Activated CD4-positive, alpha-beta T cell treated with anti-CD3 and anti-CD28 coated beads for 36 hours (primary cell): ENCODE measurements at regions of chr18 and their contacts with region 1.

Region 1: DNA sequence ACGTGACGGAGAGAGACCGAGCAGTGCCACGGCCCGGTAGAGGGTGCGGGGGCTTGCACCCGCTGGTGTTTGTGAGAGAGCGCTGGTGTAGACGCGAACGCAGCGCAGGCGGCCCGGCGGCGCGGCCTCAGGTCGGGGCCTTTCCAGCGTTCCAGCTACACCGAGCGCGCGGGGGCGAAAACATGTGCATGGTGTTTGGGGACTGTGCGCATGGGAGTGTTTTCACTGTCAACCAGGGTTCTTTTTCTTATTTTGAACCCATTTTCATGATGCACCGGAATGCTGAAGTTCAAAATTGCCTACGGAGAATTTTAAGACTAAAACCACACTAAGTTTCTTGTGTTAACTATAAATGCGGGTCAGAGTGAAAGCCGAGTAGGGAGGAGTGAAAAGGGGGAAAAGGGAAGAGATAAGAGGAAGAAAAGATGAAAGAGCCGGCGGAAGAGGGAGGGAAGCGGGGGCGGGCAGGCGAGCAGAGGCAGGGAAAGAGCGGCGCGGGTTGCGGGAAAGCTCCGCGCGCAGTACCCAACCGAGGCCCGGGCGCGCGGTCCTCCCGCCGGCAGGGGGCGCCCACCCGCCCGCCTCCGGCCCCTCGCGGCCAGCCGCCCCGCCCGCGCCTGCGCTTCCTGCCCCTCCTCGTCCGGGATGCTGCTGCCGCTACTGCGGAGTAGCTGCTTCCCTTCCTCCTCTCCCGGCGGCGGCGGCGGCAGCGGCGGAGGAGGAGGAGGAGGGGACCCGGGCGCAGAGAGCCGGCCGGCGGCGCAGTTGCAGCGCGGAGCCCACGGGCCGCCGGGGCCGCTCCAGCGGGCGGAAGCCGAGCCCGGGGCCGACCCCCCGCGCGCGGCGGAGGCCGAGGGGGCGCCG is at the start of gene RAB12:
- DNase-seq: peak; percentile 92
- ATAC-seq: peak; percentile 88
- H3K4me3 Mint-ChIP-seq: peak within 1 kb of the TSS; percentile 90
- H3K27ac Mint-ChIP-seq: peak within 1 kb of the TSS; percentile 91
- H3K4me1 Mint-ChIP-seq: peaks cover 47% of the 10 kb centered on the region
- H3K27me3 Mint-ChIP-seq: no peaks in the 10 kb centered on the region
- total RNA-seq, gene RAB12: 12.4 to 12.8 TPM

Region 2: GRCh38 chr18:8478166-8478967 is 130.7 kb before region 1 on chr18:
- CTCF ChIA-PET with region 1: no interaction called
- POLR2A ChIA-PET with region 1: no interaction called
- intact Hi-C with region 1: no loop called
- DNase-seq: peak; percentile 81
- ATAC-seq: peak; percentile 68
- H3K4me3 Mint-ChIP-seq: no peak overlapping the region
- H3K27ac Mint-ChIP-seq: no peak overlapping the region
- H3K4me1 Mint-ChIP-seq: no peaks in the 10 kb centered on the region
- H3K27me3 Mint-ChIP-seq: peaks cover 13% of the 10 kb centered on the region

Region 3: GRCh38 chr18:8704361-8705279 is 95.6 kb after region 1 on chr18:
- CTCF ChIA-PET with region 1: no interaction called
- POLR2A ChIA-PET with region 1: no interaction called
- intact Hi-C with region 1: loop called in 1 of 2 experiments (anchors 1 kb)
- DNase-seq: peak; percentile 90
- ATAC-seq: peak; percentile 98
- H3K4me3 Mint-ChIP-seq: peak overlapping the region; percentile 80
- H3K27ac Mint-ChIP-seq: no peak overlapping the region
- H3K4me1 Mint-ChIP-seq: peaks cover 12% of the 10 kb centered on the region
- H3K27me3 Mint-ChIP-seq: peaks cover 47% of the 10 kb centered on the region

Region 4: DNA sequence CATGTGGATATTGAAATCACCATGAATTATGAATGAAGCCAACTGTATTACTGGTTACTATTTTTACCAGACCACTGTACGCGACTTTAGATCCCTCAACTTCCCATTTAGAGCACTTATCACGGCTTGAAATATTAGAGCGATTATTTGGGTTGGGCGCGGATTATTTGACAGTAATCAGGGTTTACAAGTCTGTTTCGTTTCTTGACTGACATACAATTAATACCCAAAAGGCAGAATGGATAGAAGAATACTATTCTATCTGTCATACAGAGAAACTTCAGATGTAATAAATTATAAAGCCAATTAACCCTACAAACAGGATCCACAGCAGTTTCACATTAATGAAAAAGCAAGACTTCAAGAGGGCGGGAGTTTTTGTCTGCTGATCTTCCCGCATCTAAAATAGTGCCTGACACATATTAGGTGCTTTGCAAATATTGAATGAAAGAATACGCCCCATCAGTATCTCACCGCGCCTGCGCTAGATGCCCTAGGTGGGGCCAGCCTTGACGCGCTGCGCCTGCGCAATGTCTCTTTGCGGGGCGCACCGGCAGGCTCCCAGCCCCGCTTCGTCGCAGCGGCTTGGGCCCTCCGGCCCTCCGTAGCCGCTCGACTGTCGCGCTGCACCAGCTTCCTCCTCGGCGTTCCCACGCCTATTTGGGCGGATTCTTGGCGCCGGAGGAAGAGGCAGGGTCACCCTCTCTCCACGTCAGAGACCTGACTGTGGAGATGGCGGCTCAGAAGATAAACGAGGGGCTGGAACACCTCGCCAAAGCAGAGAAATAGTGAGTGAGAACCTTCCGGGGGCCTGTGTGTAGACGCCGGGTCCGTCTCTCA is 1916.6 kb after region 1 on chr18 and contains the start of gene NAPG:
- CTCF ChIA-PET with region 1: no interaction called
- POLR2A ChIA-PET with region 1: interaction called, 4 read pairs
- intact Hi-C with region 1: loop called in 1 of 2 experiments (anchors 5 kb)
- DNase-seq: peak; percentile 94
- ATAC-seq: peak; percentile 84
- H3K4me3 Mint-ChIP-seq: peak within 1 kb of the TSS; percentile 92
- H3K27ac Mint-ChIP-seq: peak within 1 kb of the TSS; percentile 96
- H3K4me1 Mint-ChIP-seq: peaks cover 49% of the 10 kb centered on the region
- H3K27me3 Mint-ChIP-seq: peaks cover 4% of the 10 kb centered on the region
- total RNA-seq, gene NAPG: 28.6 to 31.0 TPM